K562 (cell line): ENCODE measurements at regions of chr4 and their contacts with region 1.

Region 1: DNA sequence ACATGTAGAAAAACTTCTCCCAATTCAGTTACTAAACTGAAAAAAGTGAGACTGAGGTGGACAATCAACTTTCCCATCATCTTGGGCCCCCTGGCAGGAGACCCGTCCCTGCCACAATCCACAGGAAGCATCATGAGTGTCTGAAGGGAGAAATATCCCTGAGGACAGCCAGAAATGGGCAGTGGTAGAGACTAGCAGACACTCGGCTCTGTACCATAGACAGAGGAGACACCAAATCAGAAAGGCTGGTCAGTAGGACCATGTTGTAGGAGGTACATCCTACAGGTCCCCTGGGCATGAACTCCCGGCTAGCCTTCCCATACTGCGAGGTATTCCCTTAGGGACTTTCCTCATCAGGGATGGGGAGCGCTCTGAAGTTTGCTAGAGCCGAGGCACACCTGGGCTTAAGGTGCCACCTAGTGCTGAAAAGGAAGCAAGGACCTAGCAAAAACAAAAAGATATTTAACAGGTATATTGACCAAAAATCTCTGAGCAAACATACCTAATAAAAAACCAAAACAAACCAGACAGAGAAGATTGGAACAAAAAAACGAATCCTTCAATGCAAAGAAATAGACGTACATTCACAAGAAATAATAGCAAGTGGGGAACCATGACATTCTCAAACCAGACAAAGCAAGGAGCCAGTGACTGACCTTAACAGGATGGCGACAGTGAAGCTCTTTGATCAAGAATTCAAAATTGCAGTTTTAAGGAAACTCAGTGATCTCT is 55.6 kb downstream of the HAUS3 start:
- DNase-seq: peak in 1 of 4 experiments; percentile 36
- ATAC-seq: peak; percentile 84
- H3K4me3 ChIP-seq: no peak overlapping the region
- H3K27ac ChIP-seq: no peak overlapping the region
- H3K4me1 ChIP-seq: no peaks in the 10 kb centered on the region
- H3K27me3 ChIP-seq: no peaks in the 10 kb centered on the region
- CTCF ChIP-seq: peak; percentile 55 to 65 (median 59)
- EP300 ChIP-seq: no peak
- POLR2A ChIP-seq: no peak
- RAD21 ChIP-seq: peak in 1 of 2 experiments; percentile 67; a peak in 2 of 4 replicates

Region 2: GRCh38 chr4:1910643-1911042 is 275.7 kb before region 1 on chr4:
- CTCF ChIA-PET with region 1: no interaction called
- POLR2A ChIA-PET with region 1: no interaction called
- in situ Hi-C with region 1: no loop called
- intact Hi-C with region 1: loop called (anchors 10 kb)
- DNase-seq: peak; percentile 34 to 72 (median 48)
- ATAC-seq: peak; percentile 88
- H3K4me3 ChIP-seq: no peak overlapping the region
- H3K27ac ChIP-seq: no peak overlapping the region
- H3K4me1 ChIP-seq: peaks cover 5 to 15% of the 10 kb centered on the region in 2 experiments; a peak in 3 of 5 replicates
- H3K27me3 ChIP-seq: no peaks in the 10 kb centered on the region
- CTCF ChIP-seq: peak; percentile 62 to 75 (median 70)
- EP300 ChIP-seq: no peak
- POLR2A ChIP-seq: no peak
- RAD21 ChIP-seq: peak; percentile 42 to 72; a peak in 3 of 4 replicates